Calu3 (cell line): ENCODE measurements at regions of chr16 and their contacts with region 1.

Region 1: GRCh38 chr16:78331731-78332130 is 232.3 kb downstream of the WWOX start:
- DNase-seq: no peak
- H3K4me3 Mint-ChIP-seq: no peak overlapping the region
- H3K27ac Mint-ChIP-seq: no peak overlapping the region
- H3K4me1 Mint-ChIP-seq: no peaks in the 10 kb centered on the region
- H3K27me3 Mint-ChIP-seq: no peaks in the 10 kb centered on the region
- CTCF ChIP-seq: no peak

Region 2: GRCh38 chr16:78209951-78210661 is 121.6 kb before region 1 on chr16:
- CTCF ChIA-PET with region 1: no interaction called
- intact Hi-C with region 1: no loop called
- DNase-seq: peak; percentile 60
- H3K4me3 Mint-ChIP-seq: peak overlapping the region; percentile 47
- H3K27ac Mint-ChIP-seq: peak overlapping the region; percentile 46
- H3K4me1 Mint-ChIP-seq: peaks cover 47% of the 10 kb centered on the region
- H3K27me3 Mint-ChIP-seq: no peaks in the 10 kb centered on the region
- CTCF ChIP-seq: no peak

Region 3: GRCh38 chr16:78365366-78365765 is 33.6 kb after region 1 on chr16:
- CTCF ChIA-PET with region 1: no interaction called
- intact Hi-C with region 1: loop called (anchors 5 kb)
- DNase-seq: no peak
- H3K4me3 Mint-ChIP-seq: no peak overlapping the region
- H3K27ac Mint-ChIP-seq: no peak overlapping the region
- H3K4me1 Mint-ChIP-seq: no peaks in the 10 kb centered on the region
- H3K27me3 Mint-ChIP-seq: no peaks in the 10 kb centered on the region
- CTCF ChIP-seq: no peak

Region 4: GRCh38 chr16:79261481-79261940 is 929.8 kb after region 1 on chr16:
- CTCF ChIA-PET with region 1: interaction called, 11 read pairs
- intact Hi-C with region 1: no loop called
- DNase-seq: peak; percentile 56
- H3K4me3 Mint-ChIP-seq: no peak overlapping the region
- H3K27ac Mint-ChIP-seq: no peak overlapping the region
- H3K4me1 Mint-ChIP-seq: no peaks in the 10 kb centered on the region
- H3K27me3 Mint-ChIP-seq: peaks cover 41% of the 10 kb centered on the region
- CTCF ChIP-seq: no peak